ENCODE measurements at regions of chr15 and their contacts with region 1.

Region 1: DNA sequence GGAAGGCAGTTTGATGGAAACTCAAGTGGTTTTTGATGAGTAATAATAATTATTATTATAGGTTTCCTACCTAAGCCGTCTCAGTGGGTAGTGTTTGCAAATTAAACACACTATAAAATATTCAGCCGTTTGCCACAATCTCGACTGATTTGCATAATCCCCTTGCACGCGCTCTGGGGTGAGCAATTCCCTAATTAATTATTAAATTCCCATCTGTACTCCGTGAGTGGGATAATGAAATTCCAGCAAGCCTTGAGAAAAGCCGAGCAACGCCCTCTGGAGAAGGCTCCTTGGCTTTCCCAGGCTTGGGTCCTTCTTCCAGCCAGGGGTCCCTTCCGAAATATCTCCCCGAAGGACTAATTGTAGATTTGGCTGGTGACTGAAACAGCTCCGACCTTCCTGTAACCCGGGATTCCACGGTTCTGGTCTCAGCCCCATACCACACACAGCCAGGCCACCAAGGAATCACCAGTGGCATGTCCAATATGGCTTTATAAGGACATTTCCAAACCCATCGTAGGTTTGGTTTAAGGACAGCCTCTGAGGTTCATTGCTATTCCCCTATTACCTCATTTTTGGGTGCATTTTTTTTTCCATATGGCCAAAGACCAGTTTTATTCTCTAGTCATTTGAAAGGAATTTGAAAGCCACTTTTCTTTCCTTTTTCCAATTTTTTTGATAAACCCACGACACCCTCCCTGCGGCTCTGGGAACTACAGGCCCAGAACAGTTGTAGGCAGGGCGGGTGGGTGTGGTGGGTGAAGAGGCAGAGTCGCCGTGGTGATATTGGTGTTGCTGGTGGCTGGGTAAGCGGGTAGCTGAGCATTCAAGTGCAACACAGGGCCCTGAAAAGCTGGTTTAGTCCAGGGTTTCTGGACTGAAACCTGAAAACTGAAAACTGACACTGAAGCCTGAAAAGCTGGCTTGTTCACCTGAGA is 33.2 kb upstream of the RGMA start:
- DNase-seq: no peak
- H3K4me3 ChIP-seq: no peak overlapping the region
- CTCF ChIP-seq: no peak

Region 2: GRCh38 chr15:93073465-93073952 is 48.7 kb before region 1 on chr15:
- in situ Hi-C with region 1: no loop called
- DNase-seq: no peak
- H3K4me3 ChIP-seq: peak overlapping the region; percentile 24
- CTCF ChIP-seq: no peak

Region 3: DNA sequence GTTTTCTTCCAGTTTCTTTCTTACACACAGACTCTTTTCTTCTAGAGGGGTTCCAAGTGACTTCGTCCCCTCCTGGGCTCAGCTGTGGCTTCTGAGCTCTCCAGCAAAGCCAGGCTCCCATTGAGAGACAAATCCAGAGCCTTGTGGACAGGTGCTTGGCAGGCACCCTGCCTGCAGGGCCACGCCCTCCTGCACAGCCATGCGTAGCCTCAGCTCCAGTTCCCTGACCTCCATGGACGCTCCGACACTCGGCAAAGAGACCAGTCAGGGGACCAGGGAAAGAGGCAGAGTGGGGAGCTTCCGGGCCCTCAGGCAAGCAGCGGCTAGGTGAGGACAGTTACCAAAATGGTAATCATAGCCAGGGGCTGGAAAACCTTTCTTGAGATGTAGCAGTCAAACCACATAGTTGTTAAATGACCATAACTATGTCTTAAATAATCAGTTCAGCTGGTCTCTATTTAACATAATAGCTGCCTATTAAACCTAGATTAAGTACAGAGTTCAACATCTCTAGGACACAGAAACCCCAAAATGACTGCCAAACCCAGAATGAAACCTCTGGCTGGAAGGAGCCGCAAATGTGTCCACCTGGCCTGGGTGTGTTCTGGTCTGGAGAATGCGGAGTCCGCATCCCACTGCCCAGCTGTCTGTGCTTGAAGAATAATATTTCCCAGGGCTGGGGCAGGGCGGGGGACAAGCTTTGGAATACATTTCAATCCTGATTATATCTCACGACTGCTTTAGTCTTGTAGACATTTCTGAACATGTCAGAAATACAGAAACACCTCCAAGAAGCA is 36.1 kb after region 1 on chr15:
- in situ Hi-C with region 1: loop called (anchors 5 kb)
- DNase-seq: no peak
- H3K4me3 ChIP-seq: no peak overlapping the region
- CTCF ChIP-seq: no peak

Measured in astrocyte of the cerebellum (primary cell).